ENCODE measurements at regions of chr4 and their contacts with region 1.

Region 1: DNA sequence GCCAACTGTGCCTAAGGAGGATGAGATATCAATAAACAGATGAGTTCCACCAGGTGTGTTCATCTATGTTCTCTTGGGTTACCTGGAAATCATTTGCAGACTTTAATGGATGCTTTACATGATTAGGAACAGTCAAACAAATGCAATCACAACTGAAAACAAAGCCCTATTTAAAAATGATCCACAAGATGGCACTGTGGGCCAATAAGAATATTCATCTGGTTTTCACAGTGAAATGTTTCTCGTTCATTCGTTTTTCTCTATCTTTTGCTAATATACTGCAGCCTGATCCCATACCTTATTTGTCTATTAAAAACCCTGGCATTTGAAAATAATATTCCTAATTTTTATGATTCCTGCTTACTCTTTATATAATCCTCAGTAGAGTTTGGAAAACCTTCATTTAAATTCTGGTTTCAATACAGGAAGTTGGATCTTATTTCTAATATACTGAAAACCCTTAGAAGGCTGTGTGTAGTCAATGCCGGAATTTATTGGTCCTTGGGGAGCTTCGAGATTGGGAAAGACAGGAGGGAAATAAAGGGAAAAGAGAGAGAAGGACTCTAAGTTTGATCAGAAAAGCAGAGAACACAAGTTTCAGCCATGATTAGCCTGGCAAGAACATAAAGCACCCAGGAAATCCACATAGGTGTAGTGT is 63.8 kb upstream of the TAPT1 start:
- DNase-seq: peak; percentile 31
- CTCF ChIP-seq: peak; percentile 49

Region 2: GRCh38 chr4:16006791-16007446 is 283.1 kb before region 1 on chr4:
- CTCF ChIA-PET with region 1: no interaction called
- POLR2A ChIA-PET with region 1: no interaction called
- DNase-seq: no peak
- CTCF ChIP-seq: no peak

Region 3: GRCh38 chr4:16259241-16259888 is 30.7 kb before region 1 on chr4:
- CTCF ChIA-PET with region 1: no interaction called
- POLR2A ChIA-PET with region 1: no interaction called
- DNase-seq: no peak
- CTCF ChIP-seq: no peak

Region 4: DNA sequence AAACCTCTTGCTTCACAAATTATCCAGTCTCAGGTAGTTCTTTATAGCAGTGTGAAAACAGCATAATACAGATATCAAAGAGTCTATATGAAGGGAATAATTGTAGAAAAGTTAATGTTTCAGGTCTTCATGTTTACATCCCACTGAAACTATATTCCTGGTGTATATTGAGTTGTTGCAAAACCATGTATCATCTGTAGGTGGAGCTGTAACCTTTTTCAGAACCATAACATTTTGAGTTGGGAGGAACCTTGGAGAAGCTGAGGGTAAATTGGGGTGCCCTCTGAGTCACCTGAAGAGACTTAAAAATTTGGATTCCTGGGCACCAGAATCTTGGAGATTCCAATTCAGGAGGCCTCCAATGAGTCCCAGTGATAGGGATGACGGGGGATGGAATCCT is 11.8 kb before region 1 on chr4:
- CTCF ChIA-PET with region 1: interaction called, 10 read pairs
- POLR2A ChIA-PET with region 1: no interaction called
- DNase-seq: no peak
- CTCF ChIP-seq: no peak

Region 5: DNA sequence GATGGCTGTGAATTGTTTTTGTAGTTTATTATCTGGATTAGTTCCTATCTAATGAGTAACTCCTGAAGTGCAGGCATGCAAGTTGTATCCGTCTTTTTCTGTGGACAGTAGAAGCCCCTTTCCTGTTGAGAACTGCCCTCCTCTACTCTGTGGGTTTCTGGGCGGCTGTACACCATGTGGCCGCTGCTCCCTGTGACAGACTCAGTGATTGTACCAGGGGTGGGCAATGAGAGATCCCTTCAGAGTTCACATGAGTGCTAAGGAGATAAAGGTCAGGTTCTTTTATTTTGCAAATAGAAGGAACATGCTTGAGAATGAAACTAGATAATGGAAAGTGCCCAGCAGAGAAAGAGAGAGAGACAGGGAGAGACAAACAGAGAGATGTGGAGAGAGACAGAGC is 12.6 kb after region 1 on chr4:
- CTCF ChIA-PET with region 1: interaction called, 13 read pairs
- POLR2A ChIA-PET with region 1: no interaction called
- DNase-seq: no peak
- CTCF ChIP-seq: no peak

Region 6: DNA sequence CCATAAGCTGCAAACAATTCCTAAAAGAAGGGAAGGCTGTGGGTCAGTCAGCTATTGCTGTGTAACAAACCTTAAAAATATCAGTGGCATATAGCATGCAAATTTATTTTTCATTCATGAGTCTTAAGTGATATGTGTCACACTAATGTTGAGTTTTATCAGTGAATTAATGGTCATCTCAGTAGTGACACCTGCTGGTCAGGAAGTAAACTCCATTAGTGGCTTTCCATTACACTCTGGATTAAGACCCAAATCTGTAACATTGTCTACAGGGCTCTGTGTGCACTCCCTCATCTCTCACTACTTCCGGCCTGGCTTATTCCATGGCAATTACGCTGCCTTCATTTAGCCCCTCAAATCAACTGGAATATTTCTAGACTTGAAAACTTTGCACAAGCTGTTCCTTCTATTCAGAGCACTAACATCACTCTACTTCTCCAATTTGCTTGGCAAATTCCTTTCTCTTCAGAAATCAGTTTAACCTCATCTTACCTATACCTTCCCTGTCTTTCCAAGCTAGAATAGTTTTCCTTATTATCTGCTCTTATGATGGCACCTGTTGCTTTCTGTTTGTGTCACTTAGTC is 153.6 kb after region 1 on chr4:
- CTCF ChIA-PET with region 1: interaction called, 17 read pairs
- POLR2A ChIA-PET with region 1: no interaction called
- DNase-seq: peak; percentile 31
- CTCF ChIP-seq: peak; percentile 54

Region 7: GRCh38 chr4:17324386-17324830 is 1034.4 kb after region 1 on chr4:
- CTCF ChIA-PET with region 1: interaction called, 24 read pairs
- POLR2A ChIA-PET with region 1: no interaction called
- DNase-seq: peak; percentile 22
- CTCF ChIP-seq: no peak

Region 8: DNA sequence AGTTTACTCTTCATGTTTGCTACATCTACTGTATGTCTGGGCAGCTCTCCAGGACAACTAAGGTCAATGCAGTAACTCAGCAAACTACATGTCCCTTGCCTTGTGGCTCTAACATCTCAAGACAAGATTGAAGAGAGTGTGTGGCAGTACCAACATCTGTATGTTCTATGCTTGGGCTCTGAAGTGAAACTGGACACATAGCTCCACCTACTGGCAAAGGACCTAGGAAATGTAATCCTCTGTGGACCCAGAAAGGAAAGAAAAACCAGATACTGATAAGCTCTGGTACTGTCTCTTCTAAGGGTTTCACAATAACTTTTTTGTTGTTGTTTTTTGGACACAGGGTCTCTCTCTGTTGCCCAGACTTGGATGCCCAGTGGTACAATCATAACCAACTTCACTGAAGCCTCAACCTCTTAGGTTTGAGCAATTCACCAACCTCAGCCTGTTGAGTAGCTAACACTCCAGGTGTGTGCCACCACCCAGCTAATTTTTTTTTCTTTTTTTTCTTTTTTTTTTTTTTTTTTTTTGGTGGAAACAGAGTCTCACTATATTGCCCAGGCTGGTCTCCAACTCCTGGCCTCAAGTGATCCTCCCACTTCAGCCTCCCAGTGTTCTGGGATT is 1157.8 kb after region 1 on chr4:
- CTCF ChIA-PET with region 1: interaction called, 14 read pairs
- POLR2A ChIA-PET with region 1: no interaction called
- DNase-seq: peak; percentile 60
- CTCF ChIP-seq: peak; percentile 70